Natural killer cell (primary cell): ENCODE measurements at regions of chr6 and their contacts with region 1.

Region 1: DNA sequence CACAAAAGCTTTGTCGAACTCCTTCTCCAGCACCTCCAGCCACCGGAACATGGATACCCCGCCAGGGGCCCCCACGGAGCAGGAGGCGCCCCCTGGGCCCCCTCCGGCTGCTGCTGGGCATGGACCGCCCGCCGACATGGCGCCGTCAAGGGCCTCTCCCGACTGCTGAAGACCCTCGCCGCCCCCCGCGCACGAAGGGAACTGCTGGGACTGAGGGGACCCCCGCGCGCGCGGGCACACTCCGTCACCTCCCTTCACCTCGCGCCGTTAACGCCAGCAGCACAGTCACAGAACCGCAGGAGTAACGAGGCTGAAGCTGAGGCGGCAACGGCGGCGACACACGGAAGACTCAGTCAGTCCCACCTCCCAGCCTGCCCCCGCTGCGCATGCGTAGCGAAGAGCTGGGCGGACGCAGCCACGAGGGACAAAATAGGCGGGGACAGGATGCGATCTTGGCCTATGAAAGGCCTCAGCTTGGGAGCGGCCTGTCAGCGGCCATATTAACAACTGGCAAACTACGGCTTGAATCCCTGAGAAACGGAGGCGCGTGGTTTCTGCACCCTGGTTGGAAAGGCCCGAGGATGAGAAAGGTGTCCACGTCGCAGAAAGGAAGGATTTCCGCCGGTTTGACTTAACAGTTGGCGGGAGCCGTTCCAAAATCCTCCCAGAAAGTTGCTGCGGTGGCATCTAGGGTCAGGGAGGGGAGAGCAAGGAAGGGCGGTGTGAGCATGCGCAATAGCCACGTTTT is at the start of gene GOPC:
- DNase-seq: peak; percentile 92 to 100
- ATAC-seq: peak; percentile 93 to 99 (median 94)
- H3K4me3 ChIP-seq: peak within 1 kb of the TSS; percentile 69
- H3K4me3 Mint-ChIP-seq: peak within 1 kb of the TSS; percentile 98
- H3K27ac ChIP-seq: peak within 1 kb of the TSS; percentile 78
- H3K27ac Mint-ChIP-seq: peak within 1 kb of the TSS; percentile 97 to 99
- H3K4me1 ChIP-seq: peaks cover 22% of the 10 kb centered on the region
- H3K4me1 Mint-ChIP-seq: peaks cover 52 to 53% of the 10 kb centered on the region in 2 donors
- H3K27me3 ChIP-seq: no peaks in the 10 kb centered on the region
- H3K27me3 Mint-ChIP-seq: no peaks in the 10 kb centered on the region
- CTCF ChIP-seq: peak; percentile 15
- total RNA-seq, gene GOPC: 17.5 to 27.7 (median 20.4) TPM

Region 2: GRCh38 chr6:117346142-117346930 is 256.0 kb before region 1 on chr6:
- intact Hi-C with region 1: loop called (anchors 1 kb)
- DNase-seq: peak in 1 of 2 donors; percentile 30
- ATAC-seq: peak in 2 of 3 donors; percentile 36 to 49
- H3K4me3 ChIP-seq: no peak overlapping the region
- H3K4me3 Mint-ChIP-seq: no peak overlapping the region
- H3K27ac ChIP-seq: no peak overlapping the region
- H3K27ac Mint-ChIP-seq: no peak overlapping the region
- H3K4me1 ChIP-seq: no peaks in the 10 kb centered on the region
- H3K4me1 Mint-ChIP-seq: no peaks in the 10 kb centered on the region
- H3K27me3 ChIP-seq: no peaks in the 10 kb centered on the region
- H3K27me3 Mint-ChIP-seq: peaks cover 19 to 34% of the 10 kb centered on the region in 2 donors
- CTCF ChIP-seq: peak; percentile 68

Region 3: GRCh38 chr6:117463762-117464665 is 138.3 kb before region 1 on chr6:
- intact Hi-C with region 1: loop called (anchors 5 kb)
- DNase-seq: no peak
- ATAC-seq: peak; percentile 48 to 80 (median 69)
- H3K4me3 ChIP-seq: no peak overlapping the region
- H3K4me3 Mint-ChIP-seq: peak overlapping the region; percentile 61
- H3K27ac ChIP-seq: no peak overlapping the region
- H3K27ac Mint-ChIP-seq: peak overlapping the region; percentile 60 to 81
- H3K4me1 ChIP-seq: peaks cover 3% of the 10 kb centered on the region
- H3K4me1 Mint-ChIP-seq: peaks cover 55 to 60% of the 10 kb centered on the region in 2 donors
- H3K27me3 ChIP-seq: no peaks in the 10 kb centered on the region
- H3K27me3 Mint-ChIP-seq: no peaks in the 10 kb centered on the region
- CTCF ChIP-seq: no peak

Region 4: GRCh38 chr6:117547688-117548621 is 54.4 kb before region 1 on chr6:
- intact Hi-C with region 1: loop called (anchors 1 kb)
- DNase-seq: peak; percentile 54 to 67
- ATAC-seq: peak; percentile 45 to 65 (median 48)
- H3K4me3 ChIP-seq: peak overlapping the region; percentile 52
- H3K4me3 Mint-ChIP-seq: peak overlapping the region; percentile 88
- H3K27ac ChIP-seq: peak overlapping the region; percentile 72
- H3K27ac Mint-ChIP-seq: peak overlapping the region; percentile 91 to 92
- H3K4me1 ChIP-seq: peaks cover 28% of the 10 kb centered on the region
- H3K4me1 Mint-ChIP-seq: peaks cover 47 to 49% of the 10 kb centered on the region in 2 donors
- H3K27me3 ChIP-seq: no peaks in the 10 kb centered on the region
- H3K27me3 Mint-ChIP-seq: no peaks in the 10 kb centered on the region
- CTCF ChIP-seq: no peak

Region 5: GRCh38 chr6:117674991-117675657 is 72.8 kb after region 1 on chr6 and contains the start of gene NUS1:
- intact Hi-C with region 1: loop called (anchors 1 kb)
- DNase-seq: peak; percentile 94 to 99
- ATAC-seq: peak; percentile 96 to 99 (median 96)
- H3K4me3 ChIP-seq: peak within 1 kb of the TSS; percentile 69
- H3K4me3 Mint-ChIP-seq: peak within 1 kb of the TSS; percentile 91
- H3K27ac ChIP-seq: peak within 1 kb of the TSS; percentile 59
- H3K27ac Mint-ChIP-seq: peak within 1 kb of the TSS; percentile 52 to 92
- H3K4me1 ChIP-seq: peaks cover 17% of the 10 kb centered on the region
- H3K4me1 Mint-ChIP-seq: peaks cover 40 to 54% of the 10 kb centered on the region in 2 donors
- H3K27me3 ChIP-seq: no peaks in the 10 kb centered on the region
- H3K27me3 Mint-ChIP-seq: no peaks in the 10 kb centered on the region
- CTCF ChIP-seq: peak; percentile 71
- total RNA-seq, gene NUS1: 16.9 to 25.9 (median 23.4) TPM

Region 6: GRCh38 chr6:117795248-117795647 is 192.9 kb after region 1 on chr6:
- intact Hi-C with region 1: no loop called
- DNase-seq: no peak
- ATAC-seq: no peak
- H3K4me3 ChIP-seq: no peak overlapping the region
- H3K4me3 Mint-ChIP-seq: no peak overlapping the region
- H3K27ac ChIP-seq: no peak overlapping the region
- H3K27ac Mint-ChIP-seq: no peak overlapping the region
- H3K4me1 ChIP-seq: no peaks in the 10 kb centered on the region
- H3K4me1 Mint-ChIP-seq: no peaks in the 10 kb centered on the region
- H3K27me3 ChIP-seq: no peaks in the 10 kb centered on the region
- H3K27me3 Mint-ChIP-seq: no peaks in the 10 kb centered on the region
- CTCF ChIP-seq: no peak